Ovary (tissue), 10 donors: ENCODE measurements at regions of chr3 and their contacts with region 1.

Region 1: GRCh38 chr3:39208463-39209055 is 16.2 kb upstream of the XIRP1 start:
- DNase-seq: peak in 1 of 5 donors; percentile 42
- H3K4me3 ChIP-seq: no peak overlapping the region
- H3K27ac ChIP-seq: no peak overlapping the region
- H3K4me1 ChIP-seq: no peaks in the 10 kb centered on the region
- H3K27me3 ChIP-seq: no peaks in the 10 kb centered on the region
- CTCF ChIP-seq: no peak
- EP300 ChIP-seq: no peak
- POLR2A ChIP-seq: no peak

Region 2: DNA sequence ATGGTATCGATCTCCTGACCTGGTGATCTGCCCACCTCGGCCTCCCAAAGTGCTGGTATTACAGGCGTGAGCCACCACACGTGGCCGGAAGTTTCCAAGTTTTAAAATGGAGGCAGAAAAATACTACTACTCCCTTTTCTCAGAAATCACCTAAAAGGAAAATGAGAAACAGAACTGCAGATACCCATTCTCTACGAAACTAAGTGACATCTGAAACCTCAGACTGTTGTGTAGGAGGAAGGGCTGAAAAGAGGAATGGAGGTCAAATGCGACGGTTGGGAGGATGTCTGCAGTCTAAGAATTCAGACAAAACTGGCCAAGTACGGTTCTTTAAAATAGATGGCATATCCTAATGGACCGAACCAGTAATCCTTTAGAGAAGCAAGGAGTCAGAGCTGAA is 132.6 kb before region 1 on chr3:
- intact Hi-C with region 1: no loop called
- DNase-seq: no peak
- H3K4me3 ChIP-seq: no peak overlapping the region
- H3K27ac ChIP-seq: no peak overlapping the region
- H3K4me1 ChIP-seq: no peaks in the 10 kb centered on the region
- H3K27me3 ChIP-seq: no peaks in the 10 kb centered on the region
- CTCF ChIP-seq: no peak
- EP300 ChIP-seq: no peak
- POLR2A ChIP-seq: no peak

Region 3: GRCh38 chr3:39279745-39280517 is 71.4 kb after region 1 on chr3 and contains the start of gene CX3CR1:
- intact Hi-C with region 1: loop called in 1 of 4 experiments (anchors 5 kb)
- DNase-seq: no peak
- H3K4me3 ChIP-seq: no peak within 1 kb of the TSS
- H3K27ac ChIP-seq: no peak within 1 kb of the TSS
- H3K4me1 ChIP-seq: no peaks in the 10 kb centered on the region
- H3K27me3 ChIP-seq: no peaks in the 10 kb centered on the region
- CTCF ChIP-seq: no peak
- EP300 ChIP-seq: no peak
- POLR2A ChIP-seq: no peak
- total RNA-seq, gene CX3CR1: 0.12 to 5.5 (median 1.3) TPM

Region 4: GRCh38 chr3:39295184-39295775 is 86.7 kb after region 1 on chr3:
- intact Hi-C with region 1: loop called in 1 of 4 experiments (anchors 5 kb)
- DNase-seq: no peak
- H3K4me3 ChIP-seq: no peak overlapping the region
- H3K27ac ChIP-seq: no peak overlapping the region
- H3K4me1 ChIP-seq: no peaks in the 10 kb centered on the region
- H3K27me3 ChIP-seq: no peaks in the 10 kb centered on the region
- CTCF ChIP-seq: no peak
- EP300 ChIP-seq: no peak
- POLR2A ChIP-seq: no peak